AG04450 (cell line): ENCODE measurements at regions of chr11 and their contacts with region 1.

Region 1: DNA sequence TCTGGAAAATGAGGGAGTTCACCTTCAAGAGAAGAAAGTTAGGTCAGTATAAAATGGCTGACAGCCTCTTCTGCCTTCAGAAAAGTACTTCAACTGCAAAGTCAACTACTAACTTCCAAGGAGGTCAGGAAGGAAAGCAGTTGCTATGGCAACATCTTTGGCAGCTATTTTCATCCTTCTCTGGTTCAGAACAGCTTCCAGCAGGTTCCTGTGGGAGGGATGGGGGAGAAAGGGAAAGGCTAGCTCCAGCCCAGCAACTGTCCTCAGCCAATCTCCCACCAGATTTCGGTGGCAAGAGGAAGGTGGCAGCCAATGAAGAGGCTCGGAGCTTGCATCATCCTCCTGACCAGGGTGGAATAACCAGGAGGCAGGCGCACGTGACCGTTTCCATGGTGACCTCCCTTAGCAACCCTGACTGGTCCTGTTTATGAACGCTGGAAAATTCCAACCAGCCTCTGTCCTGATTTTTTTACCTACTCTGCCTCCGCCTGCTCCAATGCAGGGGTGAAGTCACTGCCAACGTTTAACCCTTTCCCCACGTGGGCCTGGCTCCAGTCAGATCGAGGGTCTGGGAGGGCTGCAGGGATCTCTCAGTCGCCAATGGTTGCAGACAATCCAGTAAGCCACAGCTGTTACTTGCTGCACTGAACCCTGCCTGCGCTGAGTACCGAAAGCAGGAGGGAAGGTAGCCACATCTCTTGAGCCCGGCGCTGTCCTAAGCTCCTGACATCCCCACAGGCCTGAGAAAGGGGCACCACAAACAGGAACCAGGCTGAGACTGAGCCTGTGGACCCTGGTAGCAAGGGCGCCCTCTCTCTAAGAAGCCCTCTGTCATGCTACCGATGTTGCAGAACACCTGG is 11.2 kb upstream of the MALAT1 start:
- DNase-seq: peak; percentile 100
- H3K4me3 ChIP-seq: peak overlapping the region; percentile 45
- H3K27ac ChIP-seq: peak overlapping the region; percentile 99
- H3K27me3 ChIP-seq: no peaks in the 10 kb centered on the region
- CTCF ChIP-seq: no peak

Region 2: DNA sequence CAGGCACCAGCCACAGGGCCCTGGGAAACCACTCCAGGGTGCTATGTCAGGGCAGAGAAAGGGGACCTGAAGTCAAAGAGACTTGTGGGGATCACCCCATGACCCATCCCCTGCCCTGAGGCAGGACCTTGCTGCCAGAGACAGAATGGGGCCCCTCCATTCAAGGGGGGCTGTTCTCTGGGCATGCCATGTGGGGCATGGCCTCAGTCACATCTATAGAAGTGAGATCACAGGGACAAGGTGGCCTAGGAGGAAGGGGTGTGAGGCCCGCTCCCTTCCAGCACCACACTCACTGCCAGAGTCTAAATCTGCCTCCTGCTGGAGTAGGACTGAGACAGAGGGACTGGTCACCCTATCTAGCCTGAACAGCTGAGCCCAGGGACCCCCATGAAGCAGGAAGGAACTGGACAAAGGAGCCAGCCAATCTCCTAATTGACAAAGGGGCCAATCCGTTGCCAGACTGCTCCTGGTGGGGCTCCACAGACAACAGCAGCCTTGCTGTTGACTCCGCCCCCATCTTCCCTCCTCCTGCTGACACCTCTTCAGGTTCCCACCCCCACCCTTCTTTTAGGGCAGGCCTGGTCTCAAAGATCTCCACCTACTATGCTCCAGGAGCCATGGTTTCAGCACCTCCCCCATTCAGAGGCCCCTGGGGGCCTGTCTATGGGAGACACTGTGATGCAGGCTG is 39.1 kb before region 1 on chr11:
- CTCF ChIA-PET with region 1: interaction called, 4 read pairs
- POLR2A ChIA-PET with region 1: interaction called, 20 read pairs
- DNase-seq: no peak
- H3K4me3 ChIP-seq: no peak overlapping the region
- H3K27ac ChIP-seq: peak overlapping the region; percentile 61
- H3K27me3 ChIP-seq: no peaks in the 10 kb centered on the region
- CTCF ChIP-seq: no peak

Region 3: DNA sequence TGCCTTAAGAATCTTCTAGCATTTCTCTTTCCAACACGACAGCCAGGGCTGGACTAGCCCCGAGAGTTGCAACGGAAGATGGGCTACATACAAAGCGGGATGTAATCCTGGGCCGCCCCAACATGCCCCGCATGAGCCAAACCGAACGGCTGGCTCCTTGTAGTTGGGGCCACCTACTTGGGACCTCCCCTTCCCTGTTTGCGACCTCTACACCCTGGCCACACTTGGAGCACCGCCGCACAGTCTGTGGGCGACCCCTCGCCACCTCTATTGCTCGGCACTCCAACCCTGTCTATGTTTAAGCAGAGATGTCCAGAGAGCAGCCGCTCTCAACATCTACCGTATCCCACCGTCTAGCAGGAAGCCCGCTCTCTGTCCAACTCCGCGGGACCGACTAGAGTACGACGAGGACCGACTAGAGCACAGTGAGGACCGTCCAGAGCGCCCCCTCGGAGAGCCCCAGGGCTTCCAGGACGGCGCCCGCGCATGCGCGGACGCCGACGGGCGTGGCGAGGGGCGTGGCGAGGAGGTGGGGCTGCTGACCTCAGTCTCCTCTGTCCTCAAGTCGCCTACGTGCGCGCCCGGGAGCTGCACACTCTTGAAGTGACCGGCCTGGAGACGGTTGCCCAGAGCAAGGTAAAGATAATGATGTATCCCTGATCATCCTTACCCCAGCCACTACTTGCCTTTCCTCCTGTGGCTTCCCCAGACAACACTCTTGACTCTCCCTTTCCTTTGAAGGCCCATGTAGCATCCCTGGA is 32.8 kb before region 1 on chr11:
- CTCF ChIA-PET with region 1: no interaction called
- POLR2A ChIA-PET with region 1: interaction called, 13 read pairs
- DNase-seq: no peak
- H3K4me3 ChIP-seq: peak overlapping the region; percentile 67
- H3K27ac ChIP-seq: peak overlapping the region; percentile 82
- H3K27me3 ChIP-seq: no peaks in the 10 kb centered on the region
- CTCF ChIP-seq: no peak

Region 4: GRCh38 chr11:65477149-65477965 is 10.3 kb before region 1 on chr11:
- CTCF ChIA-PET with region 1: interaction called, 20 read pairs
- POLR2A ChIA-PET with region 1: interaction called, 64 read pairs
- DNase-seq: no peak
- H3K4me3 ChIP-seq: peak overlapping the region; percentile 76
- H3K27ac ChIP-seq: peak overlapping the region; percentile 98
- H3K27me3 ChIP-seq: no peaks in the 10 kb centered on the region
- CTCF ChIP-seq: no peak

Region 5: GRCh38 chr11:66022401-66023185 is 535.0 kb after region 1 on chr11:
- CTCF ChIA-PET with region 1: no interaction called
- POLR2A ChIA-PET with region 1: no interaction called
- DNase-seq: no peak
- H3K4me3 ChIP-seq: no peak overlapping the region
- H3K27ac ChIP-seq: no peak overlapping the region
- H3K27me3 ChIP-seq: no peaks in the 10 kb centered on the region
- CTCF ChIP-seq: peak; percentile 92